ENCODE measurements at regions of chr2 and their contacts with region 1.

Region 1: GRCh38 chr2:38947240-38948239 is 57.9 kb downstream of the ARHGEF33 start:
- DNase-seq: peak; percentile 94
- ATAC-seq: peak; percentile 97
- H3K4me3 ChIP-seq: no peak overlapping the region
- H3K27ac ChIP-seq: peak overlapping the region; percentile 57
- H3K4me1 ChIP-seq: peaks cover 21% of the 10 kb centered on the region
- H3K27me3 ChIP-seq: no peaks in the 10 kb centered on the region
- CTCF ChIP-seq: peak; percentile 88

Region 2: GRCh38 chr2:39033980-39034379 is 86.4 kb after region 1 on chr2:
- CTCF ChIA-PET with region 1: interaction called, 65 read pairs
- POLR2A ChIA-PET with region 1: no interaction called
- intact Hi-C with region 1: loop called (anchors 5 kb)
- DNase-seq: peak; percentile 60
- ATAC-seq: peak; percentile 51
- H3K4me3 ChIP-seq: no peak overlapping the region
- H3K27ac ChIP-seq: no peak overlapping the region
- H3K4me1 ChIP-seq: peaks cover 19% of the 10 kb centered on the region
- H3K27me3 ChIP-seq: no peaks in the 10 kb centered on the region
- CTCF ChIP-seq: no peak

Region 3: GRCh38 chr2:39039072-39039471 is 91.5 kb after region 1 on chr2:
- CTCF ChIA-PET with region 1: interaction called, 65 read pairs
- POLR2A ChIA-PET with region 1: no interaction called
- intact Hi-C with region 1: loop called (anchors 5 kb)
- DNase-seq: peak; percentile 20
- ATAC-seq: peak; percentile 69
- H3K4me3 ChIP-seq: no peak overlapping the region
- H3K27ac ChIP-seq: no peak overlapping the region
- H3K4me1 ChIP-seq: peaks cover 6% of the 10 kb centered on the region
- H3K27me3 ChIP-seq: no peaks in the 10 kb centered on the region
- CTCF ChIP-seq: no peak

Region 4: DNA sequence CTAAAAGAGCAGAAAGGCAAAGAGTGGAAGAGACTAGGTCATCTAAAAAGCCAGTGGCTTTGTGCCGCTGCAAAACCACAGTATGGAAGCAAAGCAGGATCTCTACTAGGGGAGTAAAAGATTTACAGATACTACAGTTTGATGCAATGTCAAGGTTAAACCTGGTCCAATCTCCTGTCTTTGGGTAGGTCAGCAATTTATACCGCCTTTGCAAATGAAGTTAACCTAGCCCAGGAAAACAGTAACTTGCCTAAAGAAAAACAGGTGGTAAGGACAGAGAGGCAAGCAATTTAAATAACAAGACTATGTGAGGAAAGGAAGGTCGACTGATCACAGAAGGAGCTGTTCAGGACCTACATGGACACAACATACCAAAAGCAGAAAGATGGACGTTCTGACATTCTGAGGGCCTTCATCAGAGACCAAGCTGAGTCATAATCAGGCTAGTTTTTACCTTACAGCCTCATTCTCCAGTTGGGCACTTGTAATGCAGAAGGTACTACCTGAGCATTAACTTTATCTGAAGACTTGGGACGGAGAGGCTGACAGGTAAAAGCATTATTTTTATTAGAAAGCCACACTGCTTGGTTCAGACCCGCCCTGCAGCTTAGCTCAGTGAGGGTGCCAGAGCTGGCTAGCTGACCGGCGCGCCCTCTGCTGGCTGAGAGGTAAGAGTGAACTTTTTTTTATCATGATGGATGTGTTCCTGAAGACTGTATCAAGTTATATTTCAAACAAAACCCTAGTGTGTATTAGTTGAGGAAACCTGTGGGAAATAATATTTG is 280.3 kb after region 1 on chr2:
- CTCF ChIA-PET with region 1: interaction called, 9 read pairs
- POLR2A ChIA-PET with region 1: no interaction called
- intact Hi-C with region 1: loop called (anchors 1 kb)
- DNase-seq: peak; percentile 65
- ATAC-seq: peak; percentile 81
- H3K4me3 ChIP-seq: no peak overlapping the region
- H3K27ac ChIP-seq: no peak overlapping the region
- H3K4me1 ChIP-seq: no peaks in the 10 kb centered on the region
- H3K27me3 ChIP-seq: no peaks in the 10 kb centered on the region
- CTCF ChIP-seq: peak; percentile 94